ENCODE measurements at regions of chr9 and their contacts with region 1.

Region 1: GRCh38 chr9:130143958-130144366 is 28.2 kb upstream of the NCS1 start:
- DNase-seq: no peak
- ATAC-seq: peak; percentile 84

Region 2: GRCh38 chr9:129900263-129901027 is 243.5 kb before region 1 on chr9:
- intact Hi-C with region 1: no loop called
- DNase-seq: no peak
- ATAC-seq: no peak

Region 3: GRCh38 chr9:130172161-130172857 is 28.3 kb after region 1 on chr9 and contains the start of gene NCS1:
- intact Hi-C with region 1: loop called (anchors 1 kb)
- DNase-seq: peak; percentile 83
- ATAC-seq: peak; percentile 92
- total RNA-seq, gene NCS1: 5.0 TPM

Measured in Right ventricle myocardium inferior (tissue), 1 donor.